ENCODE measurements at regions of chr17 and their contacts with region 1.

Region 1: DNA sequence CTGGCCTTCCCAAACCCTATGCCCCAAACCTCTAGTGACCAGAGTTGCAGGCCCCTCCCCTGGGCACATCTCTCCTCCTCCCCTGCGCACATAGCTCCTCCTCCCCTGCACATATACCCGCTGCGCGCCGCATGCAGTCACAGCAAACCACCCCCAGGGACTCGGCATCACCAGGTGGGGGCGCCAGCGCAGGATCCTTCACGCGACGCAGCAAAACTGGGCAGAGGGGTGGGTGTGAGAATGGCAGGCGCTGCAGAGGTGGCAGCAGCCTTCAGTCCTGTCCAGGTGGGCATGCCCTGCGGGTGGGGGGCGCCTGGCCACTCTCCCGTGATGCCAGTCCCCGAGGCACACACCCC is 5.6 kb downstream of the CORO6 start:
- DNase-seq: peak; percentile 77 to 92 (median 84)
- ATAC-seq: peak; percentile 59 to 71
- H3K4me3 Mint-ChIP-seq: peak overlapping the region; percentile 81 to 95 (median 90)
- H3K27ac Mint-ChIP-seq: peak overlapping the region in 9 of 10 donors; percentile 8 to 86 (median 73)
- H3K4me1 Mint-ChIP-seq: peaks cover 17 to 50% (median 43%) of the 10 kb centered on the region in 4 donors
- H3K27me3 Mint-ChIP-seq: no peaks in the 10 kb centered on the region

Region 2: DNA sequence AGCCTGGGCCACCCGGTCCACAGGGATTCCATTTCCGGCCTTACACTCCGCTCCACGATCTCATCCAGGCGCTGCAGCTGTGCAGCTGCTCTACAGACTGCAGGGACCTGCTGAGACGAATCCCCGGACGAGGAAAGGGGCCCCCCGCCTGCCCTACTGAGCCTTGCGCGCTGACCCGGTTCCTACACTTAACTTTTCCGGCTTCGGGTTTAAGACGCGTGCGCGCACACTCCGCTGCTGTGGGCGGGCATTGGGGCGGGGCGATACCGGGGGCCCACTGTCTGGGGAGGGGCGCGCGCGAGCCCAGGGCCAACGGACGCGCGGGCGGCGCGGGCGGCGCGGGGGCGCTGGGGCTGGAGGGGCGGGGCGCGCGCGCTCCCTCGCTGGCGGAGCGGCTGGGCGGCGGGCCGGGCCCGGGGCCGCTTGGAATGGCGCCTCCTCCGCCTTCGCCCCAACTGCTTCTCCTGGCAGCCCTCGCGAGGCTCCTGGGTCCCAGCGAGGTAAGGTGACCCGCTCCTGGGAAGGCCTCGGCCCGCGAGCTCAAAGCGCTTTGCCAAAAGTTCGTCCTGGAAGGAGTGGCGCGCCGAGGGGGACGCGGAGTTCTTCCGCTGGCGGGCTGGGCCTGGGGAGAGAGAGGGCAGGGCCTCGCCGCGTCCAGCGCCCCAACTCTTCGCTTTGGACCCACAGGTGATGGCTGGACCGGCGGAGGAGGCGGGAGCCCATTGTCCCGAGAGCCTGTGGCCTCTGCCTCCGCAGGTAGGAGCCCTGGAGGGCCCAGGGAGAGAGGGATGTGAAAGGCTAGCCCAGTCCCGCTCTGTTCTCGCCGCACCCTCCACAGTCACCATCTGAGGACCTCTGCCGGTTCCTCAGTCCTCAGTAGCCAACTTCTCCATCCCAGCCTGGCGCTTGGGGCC is 48.5 kb before region 1 on chr17 and contains the start of gene TP53I13:
- POLR2A ChIA-PET with region 1: interaction called, 70 read pairs
- DNase-seq: peak; percentile 72 to 93 (median 83)
- ATAC-seq: peak; percentile 65 to 66
- H3K4me3 Mint-ChIP-seq: peak within 1 kb of the TSS; percentile 91 to 99 (median 96)
- H3K27ac Mint-ChIP-seq: peak within 1 kb of the TSS; percentile 76 to 99 (median 95)
- H3K4me1 Mint-ChIP-seq: peaks cover 28 to 41% (median 39%) of the 10 kb centered on the region in 4 donors
- H3K27me3 Mint-ChIP-seq: no peaks in the 10 kb centered on the region
- polyA plus RNA-seq, gene TP53I13: 22.7 to 26.8 (median 25.5) TPM

Region 3: DNA sequence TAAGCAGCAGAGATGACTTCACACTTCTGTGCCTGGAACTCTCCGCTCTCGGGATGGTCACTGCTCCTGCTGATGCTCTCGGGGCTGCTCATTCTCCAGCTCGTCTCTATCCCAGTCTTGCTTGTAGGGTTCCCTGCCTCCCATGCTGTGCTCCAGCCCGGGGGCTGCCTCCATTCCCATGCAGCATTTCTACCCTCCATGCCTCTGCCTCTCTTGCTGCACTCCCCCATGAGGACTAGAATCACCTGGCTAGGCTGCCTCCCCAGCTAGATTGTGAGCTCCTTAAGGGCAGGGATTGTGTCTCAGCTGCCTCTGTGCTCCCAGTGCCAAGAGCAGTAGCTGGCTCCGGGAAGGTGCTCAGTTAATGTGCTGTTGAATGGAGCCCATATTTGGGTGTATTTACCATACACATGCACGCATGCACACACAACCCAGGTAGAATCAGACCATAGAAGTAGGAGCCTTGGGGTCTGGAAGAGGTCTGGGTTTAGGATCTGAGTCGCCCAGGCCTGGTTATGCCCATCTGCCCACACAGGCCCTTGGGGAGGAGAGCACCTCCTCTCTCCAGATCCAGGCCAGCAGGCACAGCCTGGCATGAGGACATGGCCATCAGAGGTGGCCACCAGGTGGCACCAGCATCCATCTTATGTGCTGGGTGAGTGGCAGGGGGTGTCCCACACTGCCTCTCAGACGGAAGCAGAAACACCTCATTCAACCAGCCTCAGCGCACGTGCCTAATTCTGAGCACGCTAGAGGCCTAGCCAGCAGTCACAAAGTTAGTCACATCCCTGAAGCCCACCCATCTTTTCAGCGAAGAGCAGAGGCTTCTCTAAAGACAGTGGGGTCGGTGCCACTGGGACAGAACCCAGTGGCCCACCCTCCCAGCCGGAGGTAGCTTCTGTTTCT is 37.0 kb before region 1 on chr17:
- POLR2A ChIA-PET with region 1: interaction called, 28 read pairs
- DNase-seq: peak; percentile 81 to 94 (median 89)
- ATAC-seq: peak; percentile 98 to 99
- H3K4me3 Mint-ChIP-seq: peak overlapping the region in 1 of 10 donors; percentile 35
- H3K27ac Mint-ChIP-seq: peak overlapping the region; percentile 38 to 93 (median 76)
- H3K4me1 Mint-ChIP-seq: peaks cover 11 to 28% (median 26%) of the 10 kb centered on the region in 4 donors
- H3K27me3 Mint-ChIP-seq: no peaks in the 10 kb centered on the region

Region 4: GRCh38 chr17:29589524-29590410 is 27.3 kb before region 1 on chr17 and contains the start of gene GIT1:
- POLR2A ChIA-PET with region 1: interaction called, 79 read pairs
- DNase-seq: peak; percentile 72 to 89 (median 83)
- ATAC-seq: peak; percentile 74 to 82
- H3K4me3 Mint-ChIP-seq: peak within 1 kb of the TSS; percentile 88 to 95 (median 94)
- H3K27ac Mint-ChIP-seq: peak within 1 kb of the TSS; percentile 78 to 95 (median 92)
- H3K4me1 Mint-ChIP-seq: peaks cover 25 to 77% (median 73%) of the 10 kb centered on the region in 4 donors
- H3K27me3 Mint-ChIP-seq: peaks cover 0 to 2% (median 0%) of the 10 kb centered on the region in 5 donors
- polyA plus RNA-seq, gene GIT1: 4.4 to 27.7 (median 6.7) TPM

Region 5: DNA sequence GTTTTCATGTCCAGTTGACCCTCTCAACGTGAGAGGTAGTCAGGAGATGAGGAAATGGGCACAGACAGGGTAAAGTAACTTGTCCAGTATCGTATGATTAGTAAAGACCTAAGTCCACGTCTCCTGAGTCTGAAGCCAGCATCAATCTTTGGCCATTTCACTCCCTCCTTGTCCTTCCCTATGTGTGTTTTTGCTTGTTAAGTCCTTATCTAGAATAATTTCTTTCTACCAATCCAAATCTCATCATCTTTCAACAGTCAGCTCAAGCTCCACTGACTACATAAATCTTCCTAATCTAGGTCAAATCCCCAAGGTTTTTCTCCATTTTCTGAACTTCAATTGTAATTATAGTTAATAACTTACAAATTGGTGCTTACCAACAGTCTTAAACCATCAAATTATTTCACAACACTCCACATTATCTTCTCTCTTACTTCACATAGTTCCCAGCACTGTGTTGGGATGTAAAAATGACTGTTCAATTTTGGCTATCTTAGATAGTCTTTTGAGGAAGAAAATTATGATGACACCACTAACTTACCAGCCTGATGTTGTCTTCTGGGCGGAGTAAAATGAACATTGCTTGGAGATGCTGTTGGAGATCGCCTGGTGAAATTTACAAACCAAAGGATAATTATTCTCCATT is 77.9 kb after region 1 on chr17:
- POLR2A ChIA-PET with region 1: no interaction called
- DNase-seq: no peak
- ATAC-seq: no peak
- H3K4me3 Mint-ChIP-seq: no peak overlapping the region
- H3K27ac Mint-ChIP-seq: peak overlapping the region in 8 of 10 donors; percentile 3 to 71 (median 56)
- H3K4me1 Mint-ChIP-seq: peaks cover 4 to 64% (median 34%) of the 10 kb centered on the region in 4 donors
- H3K27me3 Mint-ChIP-seq: no peaks in the 10 kb centered on the region

Region 6: DNA sequence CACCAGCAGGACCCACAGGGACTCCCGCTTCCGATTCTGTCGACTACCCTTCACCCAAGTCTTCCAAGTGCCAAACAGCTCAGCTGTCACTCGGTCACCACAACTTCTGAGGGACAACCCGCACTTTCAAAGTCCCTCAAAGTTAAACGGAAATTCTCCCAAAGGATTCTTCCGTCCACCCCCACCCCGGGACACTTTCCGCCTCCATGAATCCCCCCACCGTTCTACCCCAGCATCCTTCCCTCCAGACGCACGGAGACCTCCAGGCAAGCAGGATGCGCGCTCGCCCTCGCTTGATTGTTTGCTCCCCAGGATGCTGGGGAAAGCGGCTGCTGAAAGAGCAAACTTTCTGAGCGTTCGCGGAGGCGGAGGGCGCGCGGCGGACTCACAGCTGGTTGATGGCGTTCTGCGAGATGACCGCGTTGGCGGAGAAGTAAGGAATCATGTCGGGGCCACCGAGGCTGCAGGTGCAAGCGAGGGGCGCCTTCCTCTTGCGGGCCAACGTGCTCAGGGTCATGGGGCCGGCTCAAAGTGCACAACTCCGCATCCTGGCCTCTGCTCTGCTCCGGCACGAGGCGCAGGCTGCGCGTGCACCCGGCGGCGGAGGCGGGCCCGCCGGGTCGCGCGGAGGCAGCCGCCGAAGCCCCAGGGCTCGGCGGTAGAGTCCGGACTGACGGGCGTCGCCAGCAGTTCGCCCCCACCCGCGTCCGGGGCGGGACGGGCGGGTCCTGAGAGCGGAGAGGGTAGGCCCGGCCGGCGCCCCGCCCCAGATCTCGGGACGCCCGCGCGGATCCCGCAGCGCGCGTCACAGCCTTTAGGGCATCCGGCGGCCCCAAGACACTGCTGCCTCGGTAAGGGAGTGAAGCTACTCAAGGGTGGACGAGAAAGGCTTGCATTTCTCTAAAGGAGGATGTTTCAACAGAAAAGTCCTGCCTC is 143.9 kb after region 1 on chr17:
- POLR2A ChIA-PET with region 1: interaction called, 21 read pairs
- DNase-seq: peak; percentile 85 to 95 (median 92)
- ATAC-seq: peak; percentile 78 to 87
- H3K4me3 Mint-ChIP-seq: peak overlapping the region; percentile 91 to 100 (median 97)
- H3K27ac Mint-ChIP-seq: peak overlapping the region; percentile 91 to 100 (median 96)
- H3K4me1 Mint-ChIP-seq: peaks cover 9 to 48% (median 40%) of the 10 kb centered on the region in 4 donors
- H3K27me3 Mint-ChIP-seq: no peaks in the 10 kb centered on the region

Measured in naive thymus-derived CD8-positive, alpha-beta T cell (primary cell).